WTC11 (cell line): ENCODE measurements at regions of chr1 and their contacts with region 1.

Region 1: DNA sequence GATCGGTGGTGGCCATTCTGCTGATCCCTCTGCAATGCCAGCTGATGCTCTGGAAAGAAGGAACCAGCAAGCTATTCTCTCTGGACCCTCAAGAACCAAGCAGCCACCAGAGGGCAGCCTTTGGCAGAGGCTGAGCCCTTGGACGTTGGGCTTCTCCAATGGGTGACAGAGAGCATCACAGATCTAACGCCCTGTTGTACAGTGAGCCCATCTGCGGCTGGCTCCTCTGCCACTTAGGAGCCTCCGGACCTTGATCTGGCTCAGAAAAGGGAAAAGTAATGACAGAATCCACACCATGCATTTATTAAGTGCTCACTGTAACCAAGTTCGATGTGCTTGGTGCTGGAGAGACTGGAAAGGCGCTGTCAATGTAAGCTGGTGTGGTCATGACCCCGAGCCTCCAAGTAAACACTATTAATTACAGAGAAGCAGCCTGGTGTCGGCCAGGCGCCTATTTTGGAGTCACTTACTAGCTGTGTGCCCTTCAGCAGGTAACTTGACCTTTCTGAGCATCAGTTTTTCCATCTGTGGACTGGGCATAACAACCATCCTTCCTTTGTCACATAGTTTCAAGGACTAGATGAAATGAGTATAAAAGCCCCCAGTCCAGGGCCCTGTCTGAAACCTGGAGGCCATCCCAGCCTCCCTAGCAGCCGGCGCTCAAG is 34.9 kb downstream of the ECE1 start:
- DNase-seq: peak; percentile 95
- ATAC-seq: peak; percentile 98
- H3K4me3 Mint-ChIP-seq: no peak overlapping the region
- H3K27ac Mint-ChIP-seq: no peak overlapping the region
- H3K4me1 Mint-ChIP-seq: no peaks in the 10 kb centered on the region
- H3K27me3 Mint-ChIP-seq: no peaks in the 10 kb centered on the region
- CTCF ChIP-seq: peak; percentile 79

Region 2: GRCh38 chr1:21232044-21232443 is 23.4 kb before region 1 on chr1:
- CTCF ChIA-PET with region 1: interaction called, 30 read pairs
- POLR2A ChIA-PET with region 1: interaction called, 3 read pairs
- DNase-seq: peak; percentile 37
- ATAC-seq: peak; percentile 66
- H3K4me3 Mint-ChIP-seq: no peak overlapping the region
- H3K27ac Mint-ChIP-seq: no peak overlapping the region
- H3K4me1 Mint-ChIP-seq: peaks cover 6% of the 10 kb centered on the region; the same call in 1 of the 2 replicates
- H3K27me3 Mint-ChIP-seq: no peaks in the 10 kb centered on the region
- CTCF ChIP-seq: peak; percentile 65

Region 3: GRCh38 chr1:21244986-21245687 is 10.3 kb before region 1 on chr1:
- CTCF ChIA-PET with region 1: interaction called, 17 read pairs
- POLR2A ChIA-PET with region 1: no interaction called
- DNase-seq: peak; percentile 67
- ATAC-seq: peak; percentile 88
- H3K4me3 Mint-ChIP-seq: no peak overlapping the region
- H3K27ac Mint-ChIP-seq: no peak overlapping the region
- H3K4me1 Mint-ChIP-seq: peaks cover 7% of the 10 kb centered on the region
- H3K27me3 Mint-ChIP-seq: no peaks in the 10 kb centered on the region
- CTCF ChIP-seq: peak; percentile 66

Region 4: DNA sequence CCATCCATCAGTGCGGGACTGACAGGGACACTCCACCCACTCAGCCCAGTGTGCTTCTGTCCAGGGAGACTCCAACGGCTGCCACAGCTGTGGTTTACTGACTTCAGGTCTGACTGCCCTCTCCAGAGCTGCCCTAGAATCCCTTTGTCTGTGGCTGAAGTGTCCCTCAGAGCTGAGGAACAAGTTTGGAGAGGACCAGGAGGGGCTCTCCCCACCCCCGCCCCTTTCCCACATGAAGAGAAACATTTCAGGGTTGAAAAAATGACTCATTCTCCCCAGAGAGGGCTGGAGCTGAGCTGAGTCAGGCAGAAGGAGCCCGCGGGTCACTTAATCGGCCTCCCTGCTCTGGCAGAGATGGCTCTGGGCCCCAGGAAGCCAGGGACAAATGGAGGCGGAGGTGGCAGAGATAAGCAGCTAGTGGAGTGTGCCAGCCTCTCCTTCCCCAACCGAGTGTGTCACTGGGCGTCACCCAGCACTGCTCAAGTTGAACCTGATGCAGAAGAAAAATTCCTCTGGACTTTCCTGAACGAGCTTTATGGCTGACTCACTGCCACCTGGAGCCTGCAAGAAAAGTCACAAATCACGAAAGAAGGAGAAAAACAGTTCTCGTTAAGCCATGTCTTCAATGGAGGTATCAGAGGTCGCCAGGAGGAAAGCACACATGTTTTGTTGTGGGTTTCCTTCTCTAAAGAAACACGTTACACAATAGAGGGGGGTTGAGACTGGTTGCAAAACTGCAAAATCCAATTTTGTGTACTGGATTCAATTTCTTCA is 69.1 kb after region 1 on chr1:
- CTCF ChIA-PET with region 1: interaction called, 38 read pairs
- POLR2A ChIA-PET with region 1: no interaction called
- DNase-seq: no peak
- ATAC-seq: no peak
- H3K4me3 Mint-ChIP-seq: no peak overlapping the region
- H3K27ac Mint-ChIP-seq: peak overlapping the region; percentile 79
- H3K4me1 Mint-ChIP-seq: peaks cover 95% of the 10 kb centered on the region
- H3K27me3 Mint-ChIP-seq: no peaks in the 10 kb centered on the region
- CTCF ChIP-seq: no peak

Region 5: DNA sequence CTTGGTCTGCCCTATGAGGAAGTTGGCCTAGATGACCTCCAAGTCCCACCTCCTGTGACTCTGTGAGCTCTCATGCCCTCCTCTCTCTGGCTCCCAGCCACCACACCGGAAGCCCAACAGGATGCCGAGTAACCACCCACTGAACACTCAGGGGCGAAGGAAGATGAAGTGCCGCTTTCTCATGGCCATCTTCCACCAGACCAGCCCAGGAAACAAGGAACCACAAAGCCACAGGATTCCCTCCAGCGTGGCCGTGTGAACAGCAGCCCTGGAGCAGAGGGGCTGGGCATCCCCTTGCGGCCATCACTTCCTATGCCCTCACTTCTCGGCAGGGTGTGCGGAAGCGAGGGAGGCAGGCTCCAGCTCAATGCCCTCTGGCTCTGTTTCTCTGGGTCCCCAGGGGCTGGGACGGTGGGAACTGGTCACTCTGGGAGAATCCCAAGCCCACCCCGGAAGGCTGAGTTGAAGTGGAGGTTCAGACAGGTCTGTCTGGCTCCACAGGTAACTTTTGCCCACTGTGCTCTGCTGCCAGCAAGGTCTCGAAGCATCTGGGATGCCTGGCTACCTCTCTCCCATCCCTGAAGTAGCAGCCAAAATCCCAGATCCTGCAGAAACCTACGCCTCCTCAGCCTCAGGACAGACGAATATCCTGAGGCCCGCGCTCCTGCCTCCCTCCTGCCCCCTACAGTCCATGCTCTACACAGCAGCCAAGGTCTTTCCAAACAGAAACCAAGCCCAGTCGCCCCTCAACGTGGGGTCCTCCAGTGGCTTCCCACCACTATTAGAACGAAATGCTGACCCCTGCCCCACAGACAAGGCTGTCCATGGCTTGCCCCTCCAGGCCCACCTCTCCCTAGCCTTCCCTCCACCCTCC is 79.0 kb after region 1 on chr1:
- CTCF ChIA-PET with region 1: interaction called, 24 read pairs
- POLR2A ChIA-PET with region 1: no interaction called
- DNase-seq: peak; percentile 84
- ATAC-seq: peak; percentile 86
- H3K4me3 Mint-ChIP-seq: peak overlapping the region; percentile 59
- H3K27ac Mint-ChIP-seq: peak overlapping the region; percentile 84
- H3K4me1 Mint-ChIP-seq: peaks cover 61% of the 10 kb centered on the region
- H3K27me3 Mint-ChIP-seq: no peaks in the 10 kb centered on the region; the same call in 1 of the 2 replicates
- CTCF ChIP-seq: peak; percentile 65; the same call in 1 of the 2 replicates

Region 6: GRCh38 chr1:21344750-21345443 is 89.5 kb after region 1 on chr1:
- CTCF ChIA-PET with region 1: interaction called, 16 read pairs
- POLR2A ChIA-PET with region 1: no interaction called
- DNase-seq: peak; percentile 40
- ATAC-seq: peak; percentile 17
- H3K4me3 Mint-ChIP-seq: peak overlapping the region; percentile 79
- H3K27ac Mint-ChIP-seq: no peak overlapping the region
- H3K4me1 Mint-ChIP-seq: peaks cover 19% of the 10 kb centered on the region
- H3K27me3 Mint-ChIP-seq: peaks cover 22% of the 10 kb centered on the region
- CTCF ChIP-seq: no peak

Region 7: DNA sequence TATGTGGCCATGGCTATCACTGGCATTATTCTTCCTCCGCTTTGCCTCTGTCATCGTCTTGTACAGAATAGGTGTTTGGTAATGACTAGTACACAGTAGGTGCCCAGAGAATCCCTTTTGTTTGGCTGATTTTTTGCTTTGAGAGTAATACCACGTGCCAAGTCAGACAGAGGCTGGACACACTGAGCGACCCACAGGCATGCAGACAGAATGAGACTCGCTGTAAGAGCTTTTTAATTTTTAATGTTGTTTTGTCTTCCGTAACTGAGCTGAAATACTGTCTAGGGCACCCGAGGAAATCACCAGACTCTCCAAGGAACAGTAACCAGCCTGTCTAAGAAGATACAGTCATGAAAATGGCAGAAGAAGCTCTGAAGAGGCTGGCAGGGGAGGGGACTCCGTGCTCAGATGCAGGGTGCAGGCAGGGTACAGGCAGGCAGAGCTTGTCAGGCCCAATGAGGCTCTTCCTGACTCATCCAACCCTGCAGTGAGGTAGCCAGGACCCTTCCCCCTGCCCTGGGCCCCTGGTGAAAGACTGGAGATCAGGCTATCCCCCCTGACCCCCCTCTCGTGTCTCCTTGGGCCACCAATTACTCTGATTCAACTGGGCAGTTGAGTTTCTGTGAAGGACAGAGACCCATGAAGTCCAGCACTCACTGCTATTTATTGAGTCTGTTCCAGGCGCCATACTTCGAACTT is 94.9 kb after region 1 on chr1:
- CTCF ChIA-PET with region 1: interaction called, 19 read pairs
- POLR2A ChIA-PET with region 1: no interaction called
- DNase-seq: no peak
- ATAC-seq: no peak
- H3K4me3 Mint-ChIP-seq: no peak overlapping the region
- H3K27ac Mint-ChIP-seq: no peak overlapping the region
- H3K4me1 Mint-ChIP-seq: no peaks in the 10 kb centered on the region
- H3K27me3 Mint-ChIP-seq: no peaks in the 10 kb centered on the region
- CTCF ChIP-seq: no peak